MCF 10A (cell line): ENCODE measurements at regions of chr6 and their contacts with region 1.

Region 1: DNA sequence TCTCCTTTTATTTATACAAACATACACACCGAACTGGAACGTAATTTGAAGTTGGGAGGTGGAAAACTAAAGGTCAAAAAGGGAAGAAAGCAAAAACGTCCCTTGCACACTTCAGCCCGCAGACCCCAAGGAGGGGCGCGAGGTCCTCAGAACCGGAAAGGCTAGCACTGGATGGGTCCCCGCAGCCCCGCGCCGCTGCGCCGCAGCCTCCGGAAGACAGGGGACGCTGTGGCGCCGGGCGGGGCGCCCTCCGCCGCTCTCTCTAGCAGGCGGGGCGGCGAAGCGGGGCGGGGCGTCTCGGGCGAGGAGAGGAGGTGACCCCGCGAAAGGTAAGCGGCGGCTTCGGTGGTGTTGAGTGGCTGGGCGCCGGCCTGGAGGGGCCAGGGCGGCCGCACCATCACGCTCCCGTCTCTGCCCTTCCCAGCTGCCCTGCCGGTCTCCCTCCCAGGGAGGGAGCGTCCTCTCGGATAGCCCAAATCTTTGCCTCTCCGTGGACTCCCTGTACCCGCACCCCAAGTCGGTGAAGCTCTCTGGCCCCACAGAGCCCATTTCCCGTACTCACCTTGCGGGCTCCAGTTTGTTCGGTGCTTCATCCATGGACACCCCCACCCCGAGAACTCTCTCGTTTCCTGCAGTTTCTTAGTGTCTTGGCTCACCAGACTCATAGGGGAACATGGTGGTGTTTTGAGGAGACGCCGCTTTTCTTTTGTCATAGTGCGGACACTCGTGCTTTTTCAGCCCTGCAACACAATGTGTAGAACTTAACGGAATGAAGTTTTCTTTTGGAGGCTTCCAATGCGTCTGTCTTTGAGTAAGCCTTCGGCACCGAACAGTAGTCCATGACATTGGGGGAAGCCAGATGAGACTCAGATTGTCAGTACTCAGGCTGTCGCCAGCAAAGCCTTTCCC is at the start of gene SMIM8:
- DNase-seq: peak; percentile 81
- H3K4me3 Mint-ChIP-seq: peak within 1 kb of the TSS; percentile 98
- H3K27ac Mint-ChIP-seq: peak within 1 kb of the TSS; percentile 87
- H3K4me1 Mint-ChIP-seq: no peaks in the 10 kb centered on the region
- H3K27me3 Mint-ChIP-seq: no peaks in the 10 kb centered on the region
- CTCF ChIP-seq: peak; percentile 84
- total RNA-seq, gene SMIM8: 3.2 and 3.7 TPM in 2 replicates

Region 2: GRCh38 chr6:87237804-87238203 is 84.8 kb before region 1 on chr6:
- CTCF ChIA-PET with region 1: no interaction called
- POLR2A ChIA-PET with region 1: no interaction called
- intact Hi-C with region 1: no loop called
- DNase-seq: peak; percentile 31
- H3K4me3 Mint-ChIP-seq: no peak overlapping the region
- H3K27ac Mint-ChIP-seq: no peak overlapping the region
- H3K4me1 Mint-ChIP-seq: no peaks in the 10 kb centered on the region
- H3K27me3 Mint-ChIP-seq: no peaks in the 10 kb centered on the region
- CTCF ChIP-seq: peak; percentile 46

Region 3: DNA sequence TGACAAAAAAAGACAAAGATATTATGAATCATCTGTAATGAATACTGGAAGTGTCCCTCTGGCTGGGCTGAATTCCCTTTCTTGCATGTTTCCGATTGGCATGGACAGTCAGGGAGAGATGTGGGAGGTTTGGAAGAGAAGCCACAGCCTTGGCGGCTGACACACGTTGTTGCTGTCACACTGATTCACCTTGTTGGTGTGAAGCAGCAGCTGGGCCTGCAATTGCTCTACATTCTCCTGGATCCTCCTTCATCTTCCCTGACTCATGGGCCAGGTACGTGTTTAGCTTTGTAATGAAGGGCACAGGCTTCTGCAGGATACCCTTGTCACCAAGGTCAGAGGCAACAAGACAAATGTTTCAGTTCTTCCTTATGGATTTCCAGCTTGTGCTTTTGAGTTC is 13.6 kb before region 1 on chr6:
- CTCF ChIA-PET with region 1: interaction called, 19 read pairs
- POLR2A ChIA-PET with region 1: interaction called, 4 read pairs
- intact Hi-C with region 1: no loop called
- DNase-seq: peak; percentile 22
- H3K4me3 Mint-ChIP-seq: no peak overlapping the region
- H3K27ac Mint-ChIP-seq: no peak overlapping the region
- H3K4me1 Mint-ChIP-seq: no peaks in the 10 kb centered on the region
- H3K27me3 Mint-ChIP-seq: peaks cover 40% of the 10 kb centered on the region
- CTCF ChIP-seq: no peak

Region 4: GRCh38 chr6:87333591-87334181 is 11.1 kb after region 1 on chr6:
- CTCF ChIA-PET with region 1: interaction called, 16 read pairs
- POLR2A ChIA-PET with region 1: no interaction called
- intact Hi-C with region 1: no loop called
- DNase-seq: peak; percentile 53
- H3K4me3 Mint-ChIP-seq: no peak overlapping the region
- H3K27ac Mint-ChIP-seq: no peak overlapping the region
- H3K4me1 Mint-ChIP-seq: peaks cover 14% of the 10 kb centered on the region
- H3K27me3 Mint-ChIP-seq: no peaks in the 10 kb centered on the region
- CTCF ChIP-seq: no peak

Region 5: GRCh38 chr6:87472525-87473418 is 150.2 kb after region 1 on chr6 and contains the start of gene SLC35A1:
- CTCF ChIA-PET with region 1: interaction called, 3 read pairs
- POLR2A ChIA-PET with region 1: interaction called, 4 read pairs
- intact Hi-C with region 1: loop called (anchors 2 kb)
- DNase-seq: peak; percentile 75
- H3K4me3 Mint-ChIP-seq: peak within 1 kb of the TSS; percentile 93
- H3K27ac Mint-ChIP-seq: peak within 1 kb of the TSS; percentile 98
- H3K4me1 Mint-ChIP-seq: peaks cover 8% of the 10 kb centered on the region
- H3K27me3 Mint-ChIP-seq: peaks cover 7% of the 10 kb centered on the region
- CTCF ChIP-seq: no peak
- total RNA-seq, gene SLC35A1: 10.3 and 12.1 TPM in 2 replicates